A549 (cell line): ENCODE measurements at regions of chr16 and their contacts with region 1.

Region 1: DNA sequence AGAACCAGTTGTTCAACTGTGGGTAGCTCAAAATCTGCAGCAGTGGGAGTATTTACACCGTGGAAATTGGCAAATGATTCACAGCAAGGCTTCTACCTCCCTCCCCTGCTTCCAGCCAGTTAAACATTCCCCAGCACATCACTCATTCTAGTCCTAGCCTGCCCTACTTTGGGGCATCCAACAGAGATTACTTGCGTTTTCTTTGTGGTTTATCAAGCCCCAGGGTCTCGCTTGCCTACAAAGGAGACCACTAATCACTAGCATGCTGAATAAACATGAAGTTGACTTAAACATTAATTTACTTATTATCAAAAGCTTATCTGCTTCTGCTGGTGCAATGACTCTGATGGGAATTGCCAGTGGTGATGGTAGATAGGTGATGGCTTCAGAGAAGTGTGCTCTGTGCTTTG is 94.5 kb downstream of the MARF1 start:
- DNase-seq: peak; percentile 30 to 31
- ATAC-seq: peak in 1 of 2 experiments; percentile 38; a peak in 3 of 6 replicates
- H3K4me3 ChIP-seq: no peak overlapping the region
- H3K27ac ChIP-seq: peak overlapping the region; percentile 23 to 74; a peak in 4 of 6 replicates
- H3K4me1 ChIP-seq: peaks cover 47% of the 10 kb centered on the region
- CTCF ChIP-seq: no peak
- EP300 ChIP-seq: no peak
- POLR2A ChIP-seq: no peak
- RAD21 ChIP-seq: no peak

Region 2: GRCh38 chr16:15427648-15428239 is 120.7 kb before region 1 on chr16:
- CTCF ChIA-PET with region 1: interaction called, 112 read pairs
- POLR2A ChIA-PET with region 1: no interaction called
- DNase-seq: peak; percentile 71 to 82
- ATAC-seq: peak; percentile 88 to 94
- H3K4me3 ChIP-seq: no peak overlapping the region
- H3K27ac ChIP-seq: peak overlapping the region; percentile 67 to 83
- H3K4me1 ChIP-seq: peaks cover 9% of the 10 kb centered on the region
- CTCF ChIP-seq: peak; percentile 78
- EP300 ChIP-seq: no peak
- POLR2A ChIP-seq: no peak
- RAD21 ChIP-seq: peak; percentile 81 to 82

Region 3: GRCh38 chr16:15482068-15482747 is 66.3 kb before region 1 on chr16:
- CTCF ChIA-PET with region 1: interaction called, 12 read pairs
- POLR2A ChIA-PET with region 1: no interaction called
- DNase-seq: peak; percentile 99
- ATAC-seq: peak; percentile 100
- H3K4me3 ChIP-seq: no peak overlapping the region
- H3K27ac ChIP-seq: peak overlapping the region; percentile 84 to 86
- H3K4me1 ChIP-seq: peaks cover 32% of the 10 kb centered on the region
- CTCF ChIP-seq: no peak
- EP300 ChIP-seq: 0 out of 5 replicates have a peak, but pooled peaks of 1 of the 2 experiments have one; percentile 12
- POLR2A ChIP-seq: no peak
- RAD21 ChIP-seq: peak; percentile 44 to 48; a peak in 4 of 5 replicates

Region 4: GRCh38 chr16:15529673-15530072 is 18.8 kb before region 1 on chr16:
- CTCF ChIA-PET with region 1: interaction called, 15 read pairs
- POLR2A ChIA-PET with region 1: no interaction called
- DNase-seq: no peak
- ATAC-seq: no peak
- H3K4me3 ChIP-seq: no peak overlapping the region
- H3K27ac ChIP-seq: no peak overlapping the region
- H3K4me1 ChIP-seq: no peaks in the 10 kb centered on the region
- CTCF ChIP-seq: no peak
- EP300 ChIP-seq: no peak
- POLR2A ChIP-seq: no peak
- RAD21 ChIP-seq: no peak

Region 5: DNA sequence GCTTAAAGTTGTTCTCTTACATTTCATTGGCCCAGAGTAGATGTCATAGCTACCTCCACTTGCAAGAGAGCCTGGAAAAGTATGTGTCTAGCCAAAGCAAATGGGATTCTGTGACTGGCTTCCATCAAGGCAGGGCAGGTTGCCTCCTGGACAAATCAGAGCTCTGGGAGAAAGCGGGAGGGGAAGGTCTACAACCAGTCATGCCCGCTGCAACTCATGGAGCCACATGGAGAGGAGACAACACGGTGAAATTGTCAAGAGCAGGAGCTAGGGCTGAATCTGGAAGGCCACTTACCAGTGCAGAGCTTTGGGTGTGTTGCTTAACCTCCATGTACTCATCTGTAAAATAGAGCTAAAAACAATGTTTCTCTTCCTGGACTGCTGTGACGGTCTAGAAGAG is 10.7 kb after region 1 on chr16:
- CTCF ChIA-PET with region 1: interaction called, 31 read pairs
- POLR2A ChIA-PET with region 1: interaction called, 3 read pairs
- DNase-seq: no peak
- ATAC-seq: no peak
- H3K4me3 ChIP-seq: no peak overlapping the region
- H3K27ac ChIP-seq: no peak overlapping the region
- H3K4me1 ChIP-seq: 0 out of 3 replicates have a peak, but pooled peaks cover 7% of the 10 kb centered on the region
- CTCF ChIP-seq: no peak
- EP300 ChIP-seq: no peak
- POLR2A ChIP-seq: no peak
- RAD21 ChIP-seq: no peak

Region 6: DNA sequence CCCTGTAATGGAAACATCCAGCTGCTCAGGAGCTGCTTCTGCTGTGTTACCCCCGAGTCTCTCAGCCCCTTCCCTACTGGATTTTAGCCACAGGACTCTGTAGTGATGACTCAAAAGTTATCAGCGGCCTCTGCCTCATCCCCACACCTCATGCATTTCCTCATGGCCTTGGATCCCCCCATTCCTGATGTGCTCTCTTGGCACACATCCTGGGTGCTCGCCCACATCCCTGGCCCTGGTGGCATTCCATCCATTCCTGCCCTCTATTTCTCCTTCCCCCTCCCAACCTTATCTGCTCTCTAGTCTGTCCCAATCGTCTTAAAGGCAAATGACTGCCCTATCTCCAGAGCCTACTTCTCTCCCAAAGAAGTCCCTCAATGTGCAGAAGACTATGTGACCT is 69.9 kb after region 1 on chr16:
- CTCF ChIA-PET with region 1: no interaction called
- POLR2A ChIA-PET with region 1: no interaction called
- DNase-seq: no peak
- ATAC-seq: no peak; a peak in 1 of 6 replicates
- H3K4me3 ChIP-seq: no peak overlapping the region
- H3K27ac ChIP-seq: no peak overlapping the region
- H3K4me1 ChIP-seq: 0 out of 3 replicates have a peak, but pooled peaks cover 4% of the 10 kb centered on the region
- CTCF ChIP-seq: no peak
- EP300 ChIP-seq: no peak
- POLR2A ChIP-seq: no peak
- RAD21 ChIP-seq: no peak

Region 7: DNA sequence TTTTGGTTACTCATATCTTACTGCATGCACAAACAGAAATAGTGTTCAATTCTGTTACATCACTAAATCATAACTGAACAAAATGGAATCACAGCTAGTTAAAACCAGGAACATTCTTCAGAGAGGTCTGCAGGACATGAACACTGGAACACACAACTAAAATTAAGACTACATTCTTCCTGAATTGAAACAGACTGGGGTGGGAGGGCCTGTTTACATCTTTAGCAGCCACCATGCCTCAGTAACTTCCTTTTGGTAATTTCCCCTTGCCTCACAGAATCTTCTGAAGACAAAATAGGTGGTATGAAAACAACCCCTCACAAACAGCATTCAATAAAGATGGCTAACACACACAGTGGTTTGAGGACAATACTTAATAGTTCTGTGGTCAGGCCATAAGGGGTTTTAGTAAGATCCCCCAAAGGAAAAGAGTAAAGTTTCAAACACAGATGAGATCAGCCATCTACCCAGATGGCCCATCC is 87.9 kb after region 1 on chr16:
- CTCF ChIA-PET with region 1: no interaction called
- POLR2A ChIA-PET with region 1: no interaction called
- DNase-seq: no peak
- ATAC-seq: no peak
- H3K4me3 ChIP-seq: no peak overlapping the region
- H3K27ac ChIP-seq: no peak overlapping the region
- H3K4me1 ChIP-seq: peaks cover 8% of the 10 kb centered on the region; the same call in 2 of the 3 replicates
- CTCF ChIP-seq: no peak
- EP300 ChIP-seq: no peak
- POLR2A ChIP-seq: no peak
- RAD21 ChIP-seq: no peak